Mammary epithelial cell (primary cell): ENCODE measurements at regions of chr15 and their contacts with region 1.

Region 1: DNA sequence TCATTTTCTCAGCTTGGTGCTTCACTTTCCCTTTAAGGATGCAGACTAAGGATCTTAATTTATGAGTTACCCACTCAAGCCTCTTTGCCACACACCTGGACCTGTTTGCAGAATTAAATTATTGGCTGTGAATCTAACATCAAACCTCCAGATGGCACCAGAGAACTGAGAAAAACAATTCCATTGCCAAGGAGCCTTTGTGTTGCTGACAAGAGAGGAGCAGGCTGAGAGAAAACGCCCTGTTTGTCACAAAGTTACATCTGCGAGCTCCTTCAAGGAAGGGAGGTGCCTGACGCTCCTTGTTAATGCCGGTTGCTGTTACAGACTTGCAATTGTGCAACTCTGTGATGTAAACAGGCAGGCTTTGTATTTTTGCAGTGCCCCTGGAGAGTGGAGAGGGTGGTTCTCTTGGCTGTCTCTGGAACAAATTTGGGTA is 36.3 kb upstream of the TMC3 start:
- DNase-seq: peak; percentile 68
- H3K4me3 ChIP-seq: no peak overlapping the region
- H3K27ac ChIP-seq: no peak overlapping the region
- H3K4me1 ChIP-seq: no peaks in the 10 kb centered on the region
- H3K27me3 ChIP-seq: no peaks in the 10 kb centered on the region
- CTCF ChIP-seq: peak; percentile 43 to 58

Region 2: GRCh38 chr15:81480645-81481053 is 70.3 kb after region 1 on chr15:
- CTCF ChIA-PET with region 1: no interaction called
- dilution Hi-C with region 1: no loop called
- in situ Hi-C with region 1: no loop called
- intact Hi-C with region 1: loop called (anchors 5 kb)
- DNase-seq: peak; percentile 27
- H3K4me3 ChIP-seq: no peak overlapping the region
- H3K27ac ChIP-seq: no peak overlapping the region
- H3K4me1 ChIP-seq: no peaks in the 10 kb centered on the region
- H3K27me3 ChIP-seq: no peaks in the 10 kb centered on the region
- CTCF ChIP-seq: peak; percentile 63 to 78

Region 3: DNA sequence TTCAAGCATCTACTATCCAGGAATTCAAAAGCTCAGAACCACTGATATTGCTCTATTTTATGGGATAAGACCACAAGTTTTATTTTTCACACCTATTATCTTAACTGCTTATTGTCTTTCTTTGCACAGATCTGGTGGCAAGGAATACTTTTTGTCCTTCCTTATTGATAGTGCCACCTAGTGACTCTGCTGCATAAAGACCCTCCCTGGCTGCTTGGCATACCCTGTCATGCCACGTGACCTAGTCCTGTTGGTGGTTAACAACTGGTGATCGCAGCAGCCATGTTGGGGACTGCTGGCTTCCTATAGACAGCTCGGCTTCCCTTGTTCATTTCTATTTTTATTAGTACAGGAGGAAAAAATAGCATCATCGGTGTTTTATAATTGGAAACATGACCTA is 399.2 kb after region 1 on chr15:
- CTCF ChIA-PET with region 1: no interaction called
- dilution Hi-C with region 1: no loop called
- in situ Hi-C with region 1: no loop called
- intact Hi-C with region 1: loop called (anchors 5 kb)
- DNase-seq: no peak
- H3K4me3 ChIP-seq: no peak overlapping the region
- H3K27ac ChIP-seq: no peak overlapping the region
- H3K4me1 ChIP-seq: no peaks in the 10 kb centered on the region
- H3K27me3 ChIP-seq: no peaks in the 10 kb centered on the region
- CTCF ChIP-seq: peak in 1 of 2 donors; percentile 29

Region 4: DNA sequence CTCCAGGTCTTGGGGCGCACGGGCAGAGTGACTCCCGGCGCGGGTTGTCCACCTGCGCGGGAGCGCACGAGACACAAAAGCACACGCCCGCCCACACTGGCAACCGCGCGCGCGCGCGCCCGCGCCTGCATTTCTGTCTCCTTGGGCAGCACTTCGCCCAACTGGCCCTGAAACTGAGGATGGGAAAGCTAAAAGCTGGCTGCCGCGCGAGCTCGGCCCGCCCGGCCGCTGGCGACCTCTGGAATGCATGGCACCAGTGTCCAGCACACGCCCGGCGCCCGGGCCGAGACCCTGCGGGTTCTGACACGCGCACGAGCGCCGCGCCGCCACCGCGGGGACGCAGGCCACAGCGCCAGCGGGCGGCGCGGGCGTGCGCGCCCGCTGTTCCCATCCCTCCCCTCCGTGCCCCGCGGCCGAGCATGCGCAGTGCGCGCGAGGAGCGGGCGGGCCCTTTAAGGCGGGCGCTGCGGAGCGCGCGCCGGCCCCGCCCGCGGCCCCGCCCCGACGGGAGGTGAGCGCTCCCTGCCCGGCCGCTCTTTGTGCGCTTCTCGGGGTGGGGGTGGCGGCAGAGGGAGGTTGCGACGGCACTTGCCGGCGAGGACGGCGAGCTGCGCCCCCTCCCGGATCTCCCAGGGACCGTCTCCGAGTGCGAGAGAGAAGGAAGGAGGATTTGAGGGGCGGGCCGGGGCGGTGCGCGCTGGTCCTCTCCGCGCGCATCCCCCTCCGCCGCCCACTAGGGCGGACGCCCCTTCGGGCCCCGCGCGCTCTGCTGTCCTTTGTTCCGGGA is 636.5 kb after region 1 on chr15:
- CTCF ChIA-PET with region 1: no interaction called
- dilution Hi-C with region 1: no loop called
- in situ Hi-C with region 1: no loop called
- intact Hi-C with region 1: loop called (anchors 10 kb)
- DNase-seq: peak; percentile 83
- H3K4me3 ChIP-seq: peak overlapping the region; percentile 73 to 90 (median 81)
- H3K27ac ChIP-seq: no peak overlapping the region
- H3K4me1 ChIP-seq: peaks cover 11% of the 10 kb centered on the region
- H3K27me3 ChIP-seq: no peaks in the 10 kb centered on the region
- CTCF ChIP-seq: peak; percentile 33 to 65

Region 5: DNA sequence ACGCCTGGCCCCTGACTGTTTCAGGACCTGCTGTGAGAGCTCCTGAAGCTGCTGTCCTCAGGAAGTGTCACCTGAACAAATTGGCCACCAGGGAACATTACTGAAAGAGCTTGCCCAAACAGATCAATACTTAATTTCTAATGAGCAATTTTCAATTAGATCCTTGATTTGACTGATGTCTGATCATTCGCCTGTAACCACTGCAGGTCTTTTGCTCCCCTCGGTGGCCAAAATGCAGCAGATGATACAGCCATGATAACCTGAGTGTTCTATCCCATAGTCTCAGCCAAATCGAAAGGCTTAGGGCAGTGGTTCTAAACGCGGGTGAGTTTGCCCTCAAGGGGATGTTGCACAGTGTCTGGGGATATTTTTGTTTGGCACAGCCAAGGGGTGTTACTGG is 693.1 kb after region 1 on chr15:
- CTCF ChIA-PET with region 1: no interaction called
- dilution Hi-C with region 1: no loop called
- in situ Hi-C with region 1: no loop called
- intact Hi-C with region 1: loop called (anchors 1 kb)
- DNase-seq: no peak
- H3K4me3 ChIP-seq: no peak overlapping the region
- H3K27ac ChIP-seq: no peak overlapping the region
- H3K4me1 ChIP-seq: peaks cover 13% of the 10 kb centered on the region
- H3K27me3 ChIP-seq: no peaks in the 10 kb centered on the region
- CTCF ChIP-seq: peak; percentile 16 to 43